Dendritic cell treated with granulocyte-macrophage colony-stimulating factor and Interleukin-4, amounts not matched to agents 40 ng/mL and 50 ng/mL, for 4 days (primary cell): ENCODE measurements at regions of chr17 and their contacts with region 1.

Region 1: GRCh38 chr17:78774956-78775571 is 7.0 kb downstream of the CYTH1 start:
- H3K4me3 Mint-ChIP-seq: peak overlapping the region; percentile 71
- H3K27ac Mint-ChIP-seq: peak overlapping the region; percentile 92
- H3K4me1 Mint-ChIP-seq: peaks cover 64% of the 10 kb centered on the region
- H3K27me3 Mint-ChIP-seq: no peaks in the 10 kb centered on the region

Region 2: GRCh38 chr17:78736526-78737079 is 38.5 kb before region 1 on chr17:
- intact Hi-C with region 1: loop called (anchors 5 kb)
- H3K4me3 Mint-ChIP-seq: peak overlapping the region; percentile 88
- H3K27ac Mint-ChIP-seq: peak overlapping the region; percentile 89
- H3K4me1 Mint-ChIP-seq: peaks cover 84% of the 10 kb centered on the region
- H3K27me3 Mint-ChIP-seq: no peaks in the 10 kb centered on the region

Region 3: DNA sequence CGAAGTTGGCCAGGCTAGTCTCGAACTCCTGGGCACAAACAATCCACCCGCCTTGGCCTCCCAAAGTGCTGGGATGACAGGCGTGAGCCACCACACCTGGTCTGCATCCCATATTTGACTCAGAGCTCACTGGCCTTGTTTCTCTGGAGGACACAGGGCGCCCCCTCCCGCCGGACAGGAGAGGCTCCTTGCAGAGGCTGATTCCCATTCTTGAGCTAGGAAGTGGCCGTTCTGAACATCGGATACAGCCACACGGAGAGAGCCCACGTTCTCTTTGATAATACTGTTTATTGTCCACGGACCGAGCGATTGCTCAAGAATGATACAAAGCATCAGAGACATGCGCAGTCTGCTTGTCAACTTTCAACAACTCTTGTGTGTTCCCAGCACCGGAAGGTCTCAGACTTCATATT is 77.7 kb after region 1 on chr17:
- intact Hi-C with region 1: no loop called
- H3K4me3 Mint-ChIP-seq: no peak overlapping the region
- H3K27ac Mint-ChIP-seq: no peak overlapping the region
- H3K4me1 Mint-ChIP-seq: no peaks in the 10 kb centered on the region
- H3K27me3 Mint-ChIP-seq: no peaks in the 10 kb centered on the region